HepG2 (cell line): ENCODE measurements at regions of chr15 and their contacts with region 1.

Region 1: DNA sequence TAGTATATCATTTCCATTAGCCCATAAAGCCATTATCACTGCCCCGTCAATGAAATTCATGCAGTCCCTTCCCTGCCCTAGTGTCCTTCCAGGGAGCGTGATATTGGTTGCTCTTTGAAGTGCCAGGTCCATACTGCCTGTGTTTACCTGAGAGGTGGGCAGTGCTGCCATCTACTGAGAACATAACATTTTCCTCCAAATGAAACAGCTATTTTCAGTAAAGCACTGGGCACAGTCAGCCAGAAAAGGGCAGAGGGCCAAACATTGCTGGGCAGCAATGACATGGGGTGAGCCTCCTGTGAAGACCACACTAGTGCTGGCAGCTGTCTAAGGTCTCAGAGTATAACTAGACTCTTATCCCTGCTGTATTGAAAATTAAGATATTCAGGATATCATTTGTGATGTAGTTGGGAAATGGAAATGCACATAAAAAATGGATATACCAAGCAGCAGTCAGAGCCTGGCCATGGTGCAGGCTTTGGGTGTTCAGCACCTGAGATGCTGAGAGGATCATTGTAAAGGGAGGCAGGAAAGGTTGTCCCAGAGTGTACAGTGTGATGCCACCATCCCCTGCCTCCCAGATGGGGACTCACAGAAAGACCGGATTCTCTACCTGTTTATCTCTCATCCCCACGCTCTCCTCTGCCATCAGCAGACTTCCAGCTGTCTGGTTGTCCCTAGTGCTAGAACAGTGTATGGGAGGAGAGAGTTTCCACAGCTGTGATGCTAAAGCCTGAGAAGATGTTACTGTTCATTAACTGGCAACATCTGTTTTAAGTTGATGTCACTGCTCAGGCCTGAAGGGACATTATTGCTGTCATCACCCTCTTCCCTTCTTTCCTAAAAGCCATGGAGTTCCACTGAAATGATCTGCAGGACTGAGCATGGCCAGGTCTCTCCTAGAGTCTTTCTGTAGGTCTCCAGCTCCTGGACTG is 108.8 kb downstream of the ARNT2 start:
- DNase-seq: peak; percentile 49
- ATAC-seq: peak; percentile 77
- H3K4me3 ChIP-seq: no peak overlapping the region
- H3K27ac ChIP-seq: no peak overlapping the region
- H3K4me1 ChIP-seq: no peaks in the 10 kb centered on the region
- H3K27me3 ChIP-seq: no peaks in the 10 kb centered on the region
- CTCF ChIP-seq: peak; percentile 67
- EP300 ChIP-seq: no peak
- POLR2A ChIP-seq: no peak
- RAD21 ChIP-seq: 0 out of 2 replicates have a peak, but pooled peaks have one; percentile 10

Region 2: GRCh38 chr15:80436511-80437307 is 76.3 kb before region 1 on chr15:
- CTCF ChIA-PET with region 1: no interaction called
- POLR2A ChIA-PET with region 1: no interaction called
- in situ Hi-C with region 1: no loop called
- intact Hi-C with region 1: no loop called
- DNase-seq: peak; percentile 32
- ATAC-seq: peak; percentile 45; the same call in 1 of the 3 replicates
- H3K4me3 ChIP-seq: no peak overlapping the region
- H3K27ac ChIP-seq: no peak overlapping the region
- H3K4me1 ChIP-seq: peaks cover 34% of the 10 kb centered on the region
- H3K27me3 ChIP-seq: 0 out of 5 replicates have a peak, but pooled peaks cover 0 to 3% of the 10 kb centered on the region in 2 experiments
- CTCF ChIP-seq: no peak
- EP300 ChIP-seq: no peak
- POLR2A ChIP-seq: no peak
- RAD21 ChIP-seq: no peak

Region 3: DNA sequence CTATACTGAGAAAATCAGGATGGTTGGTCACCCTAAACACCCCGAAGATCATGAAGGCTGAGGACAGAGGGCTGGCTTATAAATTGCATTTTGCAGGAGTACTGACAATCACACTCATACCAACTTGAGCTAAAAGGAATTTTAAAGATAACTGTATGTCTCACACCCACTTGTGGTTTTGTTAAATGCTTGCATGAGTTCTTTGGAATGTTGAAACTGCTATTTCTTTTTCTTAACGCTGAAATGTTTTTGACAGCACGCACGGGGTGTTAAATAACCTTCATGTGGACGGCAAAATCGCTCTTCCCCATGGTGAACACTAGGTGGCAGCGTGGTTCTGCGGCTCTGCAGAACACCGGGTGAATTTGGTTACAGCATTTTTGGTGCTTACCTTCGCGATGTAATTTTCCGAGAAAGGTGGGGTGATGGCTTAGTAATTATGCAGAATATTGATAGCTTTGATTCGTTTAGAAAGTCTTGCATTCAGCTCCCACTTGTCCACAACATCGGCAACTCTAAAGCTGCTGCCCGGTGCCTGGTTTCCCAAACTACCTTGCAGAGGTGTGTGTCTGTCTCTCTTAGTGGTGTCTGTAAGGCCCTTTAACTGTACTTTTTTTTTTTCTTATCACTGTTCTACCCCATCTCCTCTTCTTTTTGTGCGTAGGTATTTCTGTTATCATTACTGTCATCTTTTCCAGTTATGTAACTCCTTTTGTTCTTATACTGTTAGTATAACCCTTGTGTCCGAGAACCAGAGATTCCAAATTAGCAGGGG is 57.1 kb before region 1 on chr15:
- CTCF ChIA-PET with region 1: interaction called, 31 read pairs
- POLR2A ChIA-PET with region 1: no interaction called
- in situ Hi-C with region 1: loop called (anchors 5 kb)
- intact Hi-C with region 1: loop called (anchors 1 kb)
- DNase-seq: peak; percentile 44
- ATAC-seq: peak; percentile 68
- H3K4me3 ChIP-seq: no peak overlapping the region
- H3K27ac ChIP-seq: no peak overlapping the region
- H3K4me1 ChIP-seq: peaks cover 46% of the 10 kb centered on the region
- H3K27me3 ChIP-seq: no peaks in the 10 kb centered on the region
- CTCF ChIP-seq: peak; percentile 91
- EP300 ChIP-seq: no peak
- POLR2A ChIP-seq: no peak
- RAD21 ChIP-seq: peak; percentile 80